Panc1 (cell line): ENCODE measurements at regions of chr11 and their contacts with region 1.

Region 1: GRCh38 chr11:76035020-76035419 is 171.3 kb downstream of the WNT11 start:
- DNase-seq: no peak
- ATAC-seq: no peak
- H3K4me3 ChIP-seq: no peak overlapping the region
- H3K27ac ChIP-seq: no peak overlapping the region
- H3K4me1 ChIP-seq: peaks cover 23% of the 10 kb centered on the region
- H3K27me3 ChIP-seq: no peaks in the 10 kb centered on the region
- CTCF ChIP-seq: no peak

Region 2: GRCh38 chr11:75955443-75955842 is 79.6 kb before region 1 on chr11:
- CTCF ChIA-PET with region 1: no interaction called
- POLR2A ChIA-PET with region 1: no interaction called
- in situ Hi-C with region 1: loop called (anchors 5 kb)
- intact Hi-C with region 1: no loop called
- DNase-seq: no peak
- ATAC-seq: no peak
- H3K4me3 ChIP-seq: no peak overlapping the region
- H3K27ac ChIP-seq: no peak overlapping the region
- H3K4me1 ChIP-seq: no peaks in the 10 kb centered on the region
- H3K27me3 ChIP-seq: no peaks in the 10 kb centered on the region
- CTCF ChIP-seq: no peak